Activated CD4-positive, alpha-beta T cell treated with anti-CD3 and anti-CD28 coated beads for 36 hours (primary cell): ENCODE measurements at regions of chr14 and their contacts with region 1.

Region 1: GRCh38 chr14:52299692-52300278 is 14.3 kb upstream of the PTGER2 start:
- DNase-seq: no peak
- ATAC-seq: peak; percentile 53
- H3K4me3 Mint-ChIP-seq: no peak overlapping the region
- H3K27ac Mint-ChIP-seq: no peak overlapping the region
- H3K4me1 Mint-ChIP-seq: no peaks in the 10 kb centered on the region
- H3K27me3 Mint-ChIP-seq: peaks cover 6% of the 10 kb centered on the region

Region 2: GRCh38 chr14:52313903-52314594 is 14.3 kb after region 1 on chr14 and contains the start of gene PTGER2:
- CTCF ChIA-PET with region 1: interaction called, 11 read pairs
- POLR2A ChIA-PET with region 1: interaction called, 3 read pairs
- intact Hi-C with region 1: no loop called
- DNase-seq: peak; percentile 83
- ATAC-seq: peak; percentile 62
- H3K4me3 Mint-ChIP-seq: peak within 1 kb of the TSS; percentile 87
- H3K27ac Mint-ChIP-seq: peak within 1 kb of the TSS; percentile 80
- H3K4me1 Mint-ChIP-seq: peaks cover 50% of the 10 kb centered on the region
- H3K27me3 Mint-ChIP-seq: peaks cover 53% of the 10 kb centered on the region
- total RNA-seq, gene PTGER2: 2.4 TPM

Region 3: DNA sequence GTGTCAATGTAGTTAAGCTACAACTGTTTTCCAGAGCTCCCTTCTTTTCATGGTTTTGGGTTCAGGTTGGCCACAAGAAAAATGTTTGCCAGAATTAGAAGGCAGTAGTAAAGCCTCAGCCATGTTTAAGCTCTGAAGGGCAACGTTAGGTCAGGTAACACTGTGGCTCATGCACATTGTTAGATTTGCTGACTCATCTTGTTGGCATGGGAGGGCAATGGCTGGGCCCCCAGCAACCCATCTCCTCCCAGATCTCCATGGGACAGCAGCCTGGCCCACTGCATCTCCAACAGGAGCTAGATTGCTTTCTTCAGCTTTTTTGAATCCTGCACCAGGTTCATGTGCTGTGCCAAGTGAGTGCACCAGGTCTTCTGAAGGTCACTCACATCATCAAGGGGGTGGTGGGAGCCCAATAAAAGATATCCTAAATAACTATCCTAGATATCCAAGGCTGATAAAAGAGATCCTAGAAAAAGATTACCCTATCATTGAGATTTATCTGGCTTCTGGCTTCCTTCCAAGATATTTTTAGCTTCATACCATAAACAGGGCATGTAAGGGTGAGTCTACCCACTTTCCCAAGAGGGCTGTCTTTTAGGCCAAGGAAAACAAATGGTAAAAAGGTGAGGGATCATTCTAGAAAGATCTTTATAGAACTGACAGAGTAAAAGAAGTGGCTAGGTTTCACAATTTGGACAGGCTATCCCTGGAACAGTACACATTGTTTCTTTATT is 43.2 kb after region 1 on chr14:
- CTCF ChIA-PET with region 1: no interaction called
- POLR2A ChIA-PET with region 1: no interaction called
- intact Hi-C with region 1: no loop called
- DNase-seq: no peak
- ATAC-seq: no peak
- H3K4me3 Mint-ChIP-seq: no peak overlapping the region
- H3K27ac Mint-ChIP-seq: no peak overlapping the region
- H3K4me1 Mint-ChIP-seq: peaks cover 3% of the 10 kb centered on the region
- H3K27me3 Mint-ChIP-seq: peaks cover 7% of the 10 kb centered on the region

Region 4: DNA sequence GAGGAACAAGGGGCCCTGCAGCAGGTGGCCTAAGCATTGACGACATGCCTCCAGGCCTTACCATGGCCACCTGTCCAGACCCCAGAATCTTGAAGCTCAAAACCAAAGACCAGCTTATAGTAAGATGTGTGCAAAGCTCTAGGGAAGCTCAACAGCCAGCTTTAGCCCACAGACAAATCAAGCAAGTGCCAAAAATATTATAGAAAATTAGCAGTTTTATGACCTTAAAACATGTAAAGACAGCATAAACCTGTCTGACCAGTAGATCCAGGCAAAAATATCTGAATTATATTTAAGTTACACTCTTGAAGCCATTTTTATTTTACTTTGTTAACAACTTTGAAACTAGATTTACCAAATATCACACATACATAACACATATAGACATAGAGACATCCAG is 161.9 kb after region 1 on chr14:
- CTCF ChIA-PET with region 1: interaction called, 14 read pairs
- POLR2A ChIA-PET with region 1: no interaction called
- intact Hi-C with region 1: no loop called
- DNase-seq: no peak
- ATAC-seq: no peak
- H3K4me3 Mint-ChIP-seq: no peak overlapping the region
- H3K27ac Mint-ChIP-seq: no peak overlapping the region
- H3K4me1 Mint-ChIP-seq: peaks cover 8% of the 10 kb centered on the region
- H3K27me3 Mint-ChIP-seq: no peaks in the 10 kb centered on the region

Region 5: DNA sequence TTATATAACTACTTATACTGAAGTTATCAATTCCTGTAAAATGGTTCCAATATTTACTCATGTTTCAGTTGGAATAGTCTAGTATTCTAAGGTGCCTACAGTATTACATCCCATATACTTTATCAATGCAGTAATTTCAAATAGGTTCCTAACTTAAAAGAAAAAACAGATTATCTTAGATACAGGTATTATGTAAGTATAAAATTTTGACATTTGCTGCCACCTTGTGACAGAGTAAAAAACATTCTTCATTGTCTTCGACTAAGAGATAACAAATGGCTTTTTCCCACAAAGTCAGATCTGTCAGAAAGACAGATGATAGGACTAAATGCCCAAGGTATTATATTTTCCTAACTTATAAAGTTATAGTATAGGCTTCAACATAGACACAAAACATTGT is 173.8 kb after region 1 on chr14:
- CTCF ChIA-PET with region 1: interaction called, 9 read pairs
- POLR2A ChIA-PET with region 1: no interaction called
- intact Hi-C with region 1: loop called (anchors 1 kb)
- DNase-seq: no peak
- ATAC-seq: peak; percentile 26
- H3K4me3 Mint-ChIP-seq: no peak overlapping the region
- H3K27ac Mint-ChIP-seq: no peak overlapping the region
- H3K4me1 Mint-ChIP-seq: peaks cover 3% of the 10 kb centered on the region
- H3K27me3 Mint-ChIP-seq: no peaks in the 10 kb centered on the region

Region 6: GRCh38 chr14:52961060-52961639 is 661.4 kb after region 1 on chr14:
- CTCF ChIA-PET with region 1: no interaction called
- POLR2A ChIA-PET with region 1: no interaction called
- intact Hi-C with region 1: loop called in 1 of 2 experiments (anchors 10 kb)
- DNase-seq: peak; percentile 68
- ATAC-seq: peak; percentile 91
- H3K4me3 Mint-ChIP-seq: no peak overlapping the region
- H3K27ac Mint-ChIP-seq: no peak overlapping the region
- H3K4me1 Mint-ChIP-seq: peaks cover 6% of the 10 kb centered on the region
- H3K27me3 Mint-ChIP-seq: no peaks in the 10 kb centered on the region